PC-9 (cell line): ENCODE measurements at regions of chr14 and their contacts with region 1.

Region 1: GRCh38 chr14:68146807-68147206 is 327.2 kb downstream of the RAD51B start:
- DNase-seq: peak; percentile 71 to 98
- H3K4me3 ChIP-seq: no peak overlapping the region
- H3K27ac ChIP-seq: peak overlapping the region; percentile 90
- H3K4me1 ChIP-seq: peaks cover 37% of the 10 kb centered on the region
- H3K27me3 ChIP-seq: no peaks in the 10 kb centered on the region
- CTCF ChIP-seq: no peak

Region 2: GRCh38 chr14:67963960-67964744 is 182.7 kb before region 1 on chr14:
- CTCF ChIA-PET with region 1: no interaction called
- POLR2A ChIA-PET with region 1: no interaction called
- intact Hi-C with region 1: loop called (anchors 1 kb)
- DNase-seq: peak; percentile 44 to 95
- H3K4me3 ChIP-seq: peak overlapping the region; percentile 34; the same call in 1 of the 2 replicates
- H3K27ac ChIP-seq: peak overlapping the region; percentile 77
- H3K4me1 ChIP-seq: peaks cover 38% of the 10 kb centered on the region
- H3K27me3 ChIP-seq: no peaks in the 10 kb centered on the region
- CTCF ChIP-seq: no peak

Region 3: DNA sequence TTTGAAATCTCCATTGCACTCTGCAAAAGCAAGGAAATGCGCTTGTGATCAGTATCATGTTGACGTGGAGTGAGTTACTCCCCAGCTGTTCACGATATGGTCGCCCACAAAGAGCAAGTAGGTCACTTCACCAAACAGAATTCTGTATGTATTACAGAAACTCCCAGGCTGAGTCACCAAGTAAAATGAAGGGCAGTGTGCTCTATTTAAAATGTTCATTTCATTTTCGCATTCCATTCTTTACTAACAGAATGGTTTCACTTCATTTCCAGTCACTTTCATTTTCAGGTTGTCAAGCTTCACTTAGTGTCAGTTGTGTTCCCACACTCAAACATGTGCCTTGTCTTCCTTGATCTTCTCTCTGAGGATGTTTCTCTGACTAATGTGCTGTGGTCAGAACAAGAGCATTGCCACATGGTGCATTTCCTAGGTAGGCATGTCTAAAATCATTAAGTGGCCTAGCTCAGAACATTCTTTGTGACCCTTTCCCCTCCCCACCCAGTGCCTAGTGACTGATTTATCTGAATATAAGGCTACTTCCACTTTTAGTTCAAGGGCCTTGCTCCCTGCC is 64.0 kb after region 1 on chr14:
- CTCF ChIA-PET with region 1: no interaction called
- POLR2A ChIA-PET with region 1: no interaction called
- intact Hi-C with region 1: loop called (anchors 2 kb)
- DNase-seq: peak; percentile 31 to 87
- H3K4me3 ChIP-seq: no peak overlapping the region
- H3K27ac ChIP-seq: peak overlapping the region; percentile 51
- H3K4me1 ChIP-seq: peaks cover 17% of the 10 kb centered on the region
- H3K27me3 ChIP-seq: no peaks in the 10 kb centered on the region
- CTCF ChIP-seq: no peak

Region 4: GRCh38 chr14:68283378-68284123 is 136.7 kb after region 1 on chr14:
- CTCF ChIA-PET with region 1: no interaction called
- POLR2A ChIA-PET with region 1: no interaction called
- intact Hi-C with region 1: no loop called
- DNase-seq: no peak
- H3K4me3 ChIP-seq: no peak overlapping the region
- H3K27ac ChIP-seq: no peak overlapping the region
- H3K4me1 ChIP-seq: peaks cover 14% of the 10 kb centered on the region
- H3K27me3 ChIP-seq: no peaks in the 10 kb centered on the region
- CTCF ChIP-seq: no peak

Region 5: GRCh38 chr14:68341411-68342212 is 194.8 kb after region 1 on chr14:
- CTCF ChIA-PET with region 1: no interaction called
- POLR2A ChIA-PET with region 1: no interaction called
- intact Hi-C with region 1: no loop called
- DNase-seq: no peak
- H3K4me3 ChIP-seq: no peak overlapping the region
- H3K27ac ChIP-seq: no peak overlapping the region
- H3K4me1 ChIP-seq: no peaks in the 10 kb centered on the region; the same call in 1 of the 2 replicates
- H3K27me3 ChIP-seq: no peaks in the 10 kb centered on the region
- CTCF ChIP-seq: no peak